H1 (cell line): ENCODE measurements at regions of chr1 and their contacts with region 1.

Region 1: DNA sequence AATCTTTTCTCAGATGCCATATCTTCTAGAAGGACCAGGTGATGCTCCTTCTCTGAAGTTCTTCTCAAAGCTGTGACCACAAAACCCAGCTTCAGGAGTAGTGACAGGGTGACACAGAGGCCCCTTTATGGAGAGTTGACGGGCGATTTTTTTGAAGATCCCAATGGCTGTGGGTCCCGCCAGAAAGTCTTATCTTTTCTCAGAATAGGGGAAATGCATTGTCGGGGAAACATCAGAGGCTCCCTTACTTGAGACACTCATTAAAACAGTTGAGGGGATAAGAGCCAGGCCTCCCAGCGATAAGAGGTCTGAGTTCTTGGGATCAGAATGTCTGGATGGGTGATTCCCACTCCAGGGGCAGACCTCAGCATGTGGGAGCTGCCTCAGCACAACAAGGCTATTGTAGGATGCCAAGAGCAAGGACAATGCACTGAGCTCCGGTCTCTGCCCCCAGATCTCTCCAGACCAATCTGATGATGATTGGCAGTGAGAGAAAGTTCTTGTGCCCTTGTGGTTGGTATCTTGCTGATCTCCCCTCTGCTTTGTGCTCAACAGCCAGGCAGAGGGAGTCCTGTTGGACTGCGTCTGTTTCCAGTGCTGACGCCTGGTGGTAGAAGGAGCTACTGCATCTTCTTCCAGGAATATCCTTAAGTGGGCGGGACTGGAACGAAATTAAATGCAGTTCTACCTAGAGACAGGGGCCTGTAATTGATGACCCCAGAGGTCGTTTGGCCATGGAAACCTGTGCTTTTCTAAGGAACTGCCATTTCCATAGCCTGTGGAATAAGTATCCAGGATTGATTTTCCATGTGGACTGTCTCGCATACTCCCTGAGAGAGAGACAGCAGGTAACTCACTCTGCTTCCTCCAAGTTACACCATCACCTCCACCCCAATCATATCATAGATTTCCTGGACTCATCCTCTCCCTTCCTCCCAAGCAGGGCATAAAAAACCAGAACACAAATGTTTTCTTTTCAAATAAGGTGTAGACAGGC is 6.8 kb upstream of the ACKR1 start:
- DNase-seq: peak in 1 of 2 experiments; percentile 89
- H3K4me3 ChIP-seq: no peak overlapping the region
- H3K27ac ChIP-seq: no peak overlapping the region
- H3K4me1 ChIP-seq: no peaks in the 10 kb centered on the region
- H3K27me3 ChIP-seq: no peaks in the 10 kb centered on the region
- CTCF ChIP-seq: peak; percentile 85 to 99 (median 98)
- EP300 ChIP-seq: no peak
- POLR2A ChIP-seq: no peak
- RAD21 ChIP-seq: peak; percentile 77 to 82

Region 2: GRCh38 chr1:159132271-159132881 is 65.5 kb before region 1 on chr1:
- CTCF ChIA-PET with region 1: interaction called, 660 read pairs
- POLR2A ChIA-PET with region 1: no interaction called
- DNase-seq: peak in 1 of 2 experiments; percentile 80
- H3K4me3 ChIP-seq: no peak overlapping the region
- H3K27ac ChIP-seq: no peak overlapping the region
- H3K4me1 ChIP-seq: no peaks in the 10 kb centered on the region
- H3K27me3 ChIP-seq: no peaks in the 10 kb centered on the region; a peak in 1 of 7 replicates
- CTCF ChIP-seq: peak; percentile 64 to 73 (median 70)
- EP300 ChIP-seq: no peak
- POLR2A ChIP-seq: no peak
- RAD21 ChIP-seq: peak; percentile 83 to 85

Region 3: GRCh38 chr1:159171688-159172501 is 26.0 kb before region 1 on chr1:
- CTCF ChIA-PET with region 1: interaction called, 367 read pairs
- POLR2A ChIA-PET with region 1: interaction called, 4 read pairs
- DNase-seq: peak in 1 of 2 experiments; percentile 80
- H3K4me3 ChIP-seq: peak overlapping the region; percentile 87 to 99 (median 96)
- H3K27ac ChIP-seq: no peak overlapping the region
- H3K4me1 ChIP-seq: peaks cover 0 to 11% (median 3%) of the 10 kb centered on the region in 4 experiments; a peak in 6 of 7 replicates
- H3K27me3 ChIP-seq: peaks cover 0 to 3% (median 0%) of the 10 kb centered on the region in 4 experiments; a peak in 2 of 7 replicates
- CTCF ChIP-seq: no peak
- EP300 ChIP-seq: no peak
- POLR2A ChIP-seq: no peak
- RAD21 ChIP-seq: no peak

Region 4: GRCh38 chr1:159177273-159177907 is 20.5 kb before region 1 on chr1:
- CTCF ChIA-PET with region 1: interaction called, 126 read pairs
- POLR2A ChIA-PET with region 1: interaction called, 4 read pairs
- DNase-seq: peak in 1 of 2 experiments; percentile 74
- H3K4me3 ChIP-seq: no peak overlapping the region
- H3K27ac ChIP-seq: no peak overlapping the region
- H3K4me1 ChIP-seq: peaks cover 3 to 13% (median 3%) of the 10 kb centered on the region in 4 experiments; a peak in 6 of 7 replicates
- H3K27me3 ChIP-seq: no peaks in the 10 kb centered on the region
- CTCF ChIP-seq: no peak
- EP300 ChIP-seq: no peak
- POLR2A ChIP-seq: no peak
- RAD21 ChIP-seq: 0 out of 4 replicates have a peak, but pooled peaks of 1 of the 2 experiments have one; percentile 4

Region 5: DNA sequence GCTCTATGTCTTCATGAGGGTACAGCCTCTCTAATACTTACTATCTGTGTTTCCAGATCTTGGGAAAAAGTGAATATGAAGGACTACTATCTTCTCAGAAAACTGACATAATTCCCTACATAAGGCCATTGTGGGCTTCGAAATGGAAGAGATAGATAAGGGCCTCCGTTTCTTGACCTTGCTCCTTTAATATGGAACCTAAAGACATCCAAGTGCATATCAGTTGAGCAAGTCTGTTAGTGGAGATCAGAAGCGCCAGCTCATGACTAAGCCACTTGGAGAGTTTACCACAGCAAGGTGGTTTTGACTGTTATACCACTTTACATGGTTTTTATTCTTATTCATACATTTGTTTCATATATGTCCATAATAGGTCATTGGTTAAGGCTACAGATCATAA is 69.0 kb after region 1 on chr1:
- CTCF ChIA-PET with region 1: no interaction called
- POLR2A ChIA-PET with region 1: no interaction called
- DNase-seq: no peak
- H3K4me3 ChIP-seq: no peak overlapping the region
- H3K27ac ChIP-seq: no peak overlapping the region
- H3K4me1 ChIP-seq: no peaks in the 10 kb centered on the region
- H3K27me3 ChIP-seq: no peaks in the 10 kb centered on the region
- CTCF ChIP-seq: no peak
- EP300 ChIP-seq: no peak
- POLR2A ChIP-seq: no peak
- RAD21 ChIP-seq: no peak